Activated T-helper 1 cell treated with anti-CD3 and anti-CD28 coated beads, Interleukin-12 subunit alpha, Interleukin-12 subunit beta, Interleukin-2, Interleukin-4 antibody, amounts not matched to agents 30 ng/mL and 10 ng/mL and 1 ng/mL, durations not matched to agents 14 hours and 24 hours and 36 hours (primary cell): ENCODE measurements at regions of chr7 and their contacts with region 1.

Region 1: GRCh38 chr7:3065724-3066143 is 22.1 kb upstream of the CARD11 start:
- DNase-seq: peak; percentile 37
- H3K4me3 Mint-ChIP-seq: no peak overlapping the region
- H3K27ac Mint-ChIP-seq: peak overlapping the region; percentile 78
- H3K4me1 Mint-ChIP-seq: peaks cover 88% of the 10 kb centered on the region
- H3K27me3 Mint-ChIP-seq: no peaks in the 10 kb centered on the region

Region 2: DNA sequence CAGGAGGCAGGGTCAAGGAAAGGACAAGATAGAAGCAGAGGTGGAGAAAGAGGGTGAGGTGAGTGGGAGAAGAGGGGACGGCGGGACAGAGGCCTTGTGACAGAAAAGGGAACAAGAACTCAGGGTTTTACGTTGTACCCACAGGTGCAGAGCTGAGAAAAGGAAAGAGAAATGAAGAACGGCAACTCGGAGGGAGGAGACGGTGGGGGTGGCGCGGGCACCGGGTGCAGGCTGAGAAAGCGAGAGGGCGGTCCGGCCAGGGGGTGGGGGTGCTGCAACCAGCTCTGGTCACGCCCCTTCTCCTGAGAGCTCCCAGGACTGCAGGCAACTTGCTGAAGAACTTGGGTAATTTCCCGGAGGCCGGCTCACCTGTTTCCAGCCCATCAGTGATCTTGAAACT is 87.3 kb before region 1 on chr7:
- intact Hi-C with region 1: loop called (anchors 1 kb)
- DNase-seq: peak; percentile 78
- H3K4me3 Mint-ChIP-seq: peak overlapping the region; percentile 67
- H3K27ac Mint-ChIP-seq: peak overlapping the region; percentile 89
- H3K4me1 Mint-ChIP-seq: peaks cover 64% of the 10 kb centered on the region
- H3K27me3 Mint-ChIP-seq: no peaks in the 10 kb centered on the region

Region 3: DNA sequence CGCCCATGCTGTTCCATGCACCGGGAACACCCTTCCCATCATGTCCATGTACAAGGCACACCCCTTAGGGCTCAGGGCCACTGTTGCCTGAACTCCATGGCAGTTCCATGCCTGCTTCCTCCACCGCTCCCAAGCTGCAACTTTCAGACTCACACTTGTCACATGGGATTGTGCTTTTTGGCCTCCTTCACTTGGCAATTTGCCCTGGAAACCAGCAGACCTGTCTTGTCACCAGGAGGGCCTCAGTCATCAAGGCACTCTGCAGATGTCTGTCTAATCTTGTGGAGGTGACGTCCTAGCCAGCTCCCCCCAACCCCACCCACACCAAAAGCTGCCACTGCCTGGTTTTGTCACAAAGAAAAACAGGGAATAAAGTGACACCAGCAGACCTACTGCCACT is 69.6 kb before region 1 on chr7:
- intact Hi-C with region 1: no loop called
- DNase-seq: no peak
- H3K4me3 Mint-ChIP-seq: no peak overlapping the region
- H3K27ac Mint-ChIP-seq: no peak overlapping the region
- H3K4me1 Mint-ChIP-seq: peaks cover 6% of the 10 kb centered on the region
- H3K27me3 Mint-ChIP-seq: no peaks in the 10 kb centered on the region

Region 4: GRCh38 chr7:3042861-3043489 is 22.8 kb before region 1 on chr7:
- intact Hi-C with region 1: loop called (anchors 1 kb)
- DNase-seq: peak; percentile 65
- H3K4me3 Mint-ChIP-seq: peak overlapping the region; percentile 97
- H3K27ac Mint-ChIP-seq: peak overlapping the region; percentile 95
- H3K4me1 Mint-ChIP-seq: peaks cover 47% of the 10 kb centered on the region
- H3K27me3 Mint-ChIP-seq: no peaks in the 10 kb centered on the region

Region 5: DNA sequence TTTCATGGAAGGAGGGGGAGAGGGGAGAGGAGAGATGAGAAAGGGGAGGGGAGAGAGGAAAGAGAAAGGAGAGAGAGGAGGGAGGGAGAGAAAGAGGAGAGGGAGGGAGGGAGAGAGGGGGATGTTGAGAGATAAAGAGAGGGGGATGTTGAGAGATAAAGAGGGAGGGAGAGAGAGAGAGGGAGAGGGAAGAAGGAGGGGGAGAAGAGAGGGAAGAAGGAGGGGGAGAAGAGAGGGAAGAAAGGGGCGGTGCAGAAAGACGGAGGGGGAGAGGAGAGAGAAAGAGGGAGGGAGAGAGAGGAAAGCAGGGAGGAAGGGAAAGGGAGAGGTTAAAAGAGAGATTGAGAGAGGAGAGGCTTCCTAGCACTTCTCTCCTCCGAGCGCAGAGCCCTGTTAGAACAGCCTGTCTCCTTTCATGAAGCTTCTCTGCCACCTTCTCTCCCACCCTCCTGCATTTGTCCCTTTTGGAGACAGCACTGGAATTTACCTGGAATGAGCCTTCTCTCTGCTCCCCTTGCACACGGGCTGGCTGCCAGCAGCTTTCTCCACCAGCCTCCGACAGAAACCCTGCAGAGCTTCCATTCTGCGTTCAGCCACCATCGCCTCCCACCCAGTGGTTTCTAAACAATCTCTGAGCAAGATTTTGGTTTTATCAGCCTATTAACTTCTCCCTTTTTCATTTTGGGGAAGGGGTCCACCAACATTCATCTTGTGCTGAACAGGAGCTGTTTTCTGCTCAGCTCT is 51.9 kb after region 1 on chr7:
- intact Hi-C with region 1: loop called (anchors 1 kb)
- DNase-seq: no peak
- H3K4me3 Mint-ChIP-seq: peak overlapping the region; percentile 86
- H3K27ac Mint-ChIP-seq: peak overlapping the region; percentile 90
- H3K4me1 Mint-ChIP-seq: peaks cover 68% of the 10 kb centered on the region
- H3K27me3 Mint-ChIP-seq: peaks cover 5% of the 10 kb centered on the region

Region 6: DNA sequence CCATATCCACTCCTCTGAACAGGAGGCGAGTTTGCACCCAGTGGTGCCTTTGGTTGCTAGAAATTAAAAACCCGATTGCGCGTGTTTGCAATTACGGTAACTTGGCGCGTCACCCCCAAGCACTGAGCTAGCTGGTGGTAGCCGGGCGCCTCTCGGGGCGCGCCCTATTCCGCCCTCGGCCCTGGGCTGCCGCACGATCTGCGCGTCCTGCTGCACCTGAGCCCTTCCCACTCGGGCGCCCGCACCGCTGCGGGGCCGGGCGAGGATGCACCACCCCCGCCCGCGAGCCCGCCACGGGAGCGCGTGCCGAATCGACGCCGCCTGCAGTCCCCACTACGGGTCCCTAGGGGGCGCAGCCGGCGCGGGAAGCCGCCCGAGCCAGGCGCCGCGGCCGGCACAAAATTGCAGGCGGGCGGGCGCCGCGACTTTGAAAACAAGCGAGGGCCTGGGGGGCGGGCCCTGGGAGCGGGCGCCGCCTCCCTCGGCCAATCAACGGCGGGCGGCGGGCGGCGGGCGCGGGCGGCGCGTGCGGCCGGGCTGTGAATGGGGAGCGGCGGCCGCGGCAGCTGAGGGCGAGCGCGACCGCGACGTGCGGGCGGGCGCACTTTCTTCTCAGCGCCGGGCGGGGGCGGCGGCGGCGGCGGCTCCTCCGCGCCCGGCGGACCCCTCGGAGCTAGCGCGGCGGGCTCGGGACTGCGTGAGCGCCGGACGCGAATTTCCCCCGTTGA is 235.1 kb after region 1 on chr7 and contains the start of gene SDK1:
- intact Hi-C with region 1: loop called (anchors 1 kb)
- DNase-seq: peak; percentile 88
- H3K4me3 Mint-ChIP-seq: peak within 1 kb of the TSS; percentile 73
- H3K27ac Mint-ChIP-seq: peak within 1 kb of the TSS; percentile 40
- H3K4me1 Mint-ChIP-seq: peaks cover 18% of the 10 kb centered on the region
- H3K27me3 Mint-ChIP-seq: peaks cover 53% of the 10 kb centered on the region
- total RNA-seq, gene SDK1: 0.08 and 0.15 TPM in 2 replicates